ENCODE measurements at regions of chr1 and their contacts with region 1.

Region 1: GRCh38 chr1:205791568-205792180 is 16.4 kb upstream of the RAB29 start:
- DNase-seq: no peak
- H3K4me3 ChIP-seq: no peak overlapping the region
- H3K27ac ChIP-seq: no peak overlapping the region
- H3K27me3 ChIP-seq: no peaks in the 10 kb centered on the region
- CTCF ChIP-seq: peak; percentile 90

Region 2: DNA sequence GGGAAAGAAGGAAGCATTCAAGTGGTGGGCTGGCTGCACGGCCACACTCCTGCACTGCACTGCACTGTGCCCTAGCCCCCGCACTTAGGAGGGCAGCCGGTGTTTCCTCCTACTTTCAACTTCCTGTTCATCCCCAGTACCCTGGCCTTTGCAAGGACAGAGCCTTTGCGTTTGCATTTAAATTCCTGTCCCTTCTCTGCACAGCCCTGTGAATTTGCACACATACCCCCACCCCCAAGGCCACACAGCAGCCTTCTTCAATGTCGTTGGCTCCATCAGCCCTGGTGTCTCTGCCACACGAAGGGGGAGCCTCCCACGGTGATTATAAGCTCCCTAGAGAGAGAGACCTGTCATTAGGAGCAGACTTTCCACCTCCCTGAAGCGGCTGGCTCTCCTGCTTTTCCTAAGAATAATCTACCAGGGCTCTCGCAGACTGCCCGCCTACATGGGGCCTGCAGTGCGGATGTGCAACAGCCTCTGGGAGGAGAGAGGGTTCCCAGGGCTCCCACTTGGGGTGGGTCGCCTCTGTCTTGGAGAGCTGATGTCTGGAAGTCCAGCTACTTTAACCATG is 98.2 kb before region 1 on chr1:
- CTCF ChIA-PET with region 1: no interaction called
- POLR2A ChIA-PET with region 1: no interaction called
- DNase-seq: no peak
- H3K4me3 ChIP-seq: no peak overlapping the region
- H3K27ac ChIP-seq: no peak overlapping the region
- H3K27me3 ChIP-seq: peaks cover 3% of the 10 kb centered on the region
- CTCF ChIP-seq: no peak

Region 3: GRCh38 chr1:205775015-205775716 is 16.5 kb before region 1 on chr1 and contains the start of gene RAB29:
- CTCF ChIA-PET with region 1: interaction called, 11 read pairs
- POLR2A ChIA-PET with region 1: no interaction called
- DNase-seq: peak; percentile 46
- H3K4me3 ChIP-seq: peak within 1 kb of the TSS; percentile 97
- H3K27ac ChIP-seq: peak within 1 kb of the TSS; percentile 47
- H3K27me3 ChIP-seq: peaks cover 2% of the 10 kb centered on the region
- CTCF ChIP-seq: no peak
- polyA plus RNA-seq, gene RAB29: 13.8 and 14.6 TPM in 2 replicates

Region 4: DNA sequence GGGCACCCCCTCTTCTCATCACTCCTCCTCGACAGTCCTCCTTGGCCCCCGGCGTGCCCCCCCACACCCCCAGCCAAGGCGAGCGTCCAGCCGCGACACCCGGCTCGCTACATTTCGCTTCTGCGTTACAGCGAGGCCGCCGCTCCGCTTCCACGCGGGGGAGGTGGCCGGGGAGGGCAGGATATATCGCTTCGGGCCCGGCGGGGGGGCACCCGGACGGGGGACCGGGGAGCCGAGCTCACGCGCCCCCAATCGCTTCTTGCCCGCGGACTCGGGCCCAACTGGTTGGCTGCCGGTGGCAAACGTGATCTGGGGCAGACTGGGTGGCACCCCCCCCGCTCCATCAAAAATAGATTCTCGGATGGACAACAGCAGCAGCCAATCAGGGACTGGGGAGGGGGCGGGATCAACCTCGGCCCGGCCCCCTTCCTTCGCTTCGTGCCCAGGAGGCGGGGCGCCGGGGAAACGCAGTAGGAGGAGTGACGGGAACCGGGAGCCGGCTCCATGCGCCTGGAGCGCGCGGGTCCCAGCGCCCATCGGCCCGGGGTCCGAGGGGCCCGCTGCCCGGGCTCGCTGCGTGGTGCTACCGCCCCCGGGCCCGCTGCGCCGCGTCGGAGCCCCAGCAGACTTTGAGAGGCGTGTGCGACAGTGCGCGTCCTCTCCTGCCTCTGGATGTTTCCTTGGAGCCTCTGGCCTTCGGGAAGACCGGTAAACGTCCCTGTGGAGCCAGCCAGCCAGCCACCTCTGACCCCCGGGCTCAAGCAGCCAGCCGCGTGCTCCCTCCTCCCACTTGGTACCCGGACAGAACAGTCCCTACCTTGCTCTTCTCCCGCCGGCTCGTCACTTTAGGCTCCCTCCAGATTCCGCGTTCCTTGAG is 21.4 kb after region 1 on chr1 and contains the start of gene SLC41A1:
- CTCF ChIA-PET with region 1: interaction called, 20 read pairs
- POLR2A ChIA-PET with region 1: no interaction called
- DNase-seq: peak; percentile 63
- H3K4me3 ChIP-seq: peak within 1 kb of the TSS; percentile 83
- H3K27ac ChIP-seq: peak within 1 kb of the TSS; percentile 57
- H3K27me3 ChIP-seq: peaks cover 3% of the 10 kb centered on the region
- CTCF ChIP-seq: no peak
- polyA plus RNA-seq, gene SLC41A1: 23.9 and 29.0 TPM in 2 replicates

Region 5: GRCh38 chr1:205919026-205919746 is 127.5 kb after region 1 on chr1:
- CTCF ChIA-PET with region 1: interaction called, 15 read pairs
- POLR2A ChIA-PET with region 1: no interaction called
- DNase-seq: peak; percentile 60
- H3K4me3 ChIP-seq: no peak overlapping the region
- H3K27ac ChIP-seq: no peak overlapping the region
- H3K27me3 ChIP-seq: peaks cover 9% of the 10 kb centered on the region
- CTCF ChIP-seq: peak; percentile 93

Region 6: DNA sequence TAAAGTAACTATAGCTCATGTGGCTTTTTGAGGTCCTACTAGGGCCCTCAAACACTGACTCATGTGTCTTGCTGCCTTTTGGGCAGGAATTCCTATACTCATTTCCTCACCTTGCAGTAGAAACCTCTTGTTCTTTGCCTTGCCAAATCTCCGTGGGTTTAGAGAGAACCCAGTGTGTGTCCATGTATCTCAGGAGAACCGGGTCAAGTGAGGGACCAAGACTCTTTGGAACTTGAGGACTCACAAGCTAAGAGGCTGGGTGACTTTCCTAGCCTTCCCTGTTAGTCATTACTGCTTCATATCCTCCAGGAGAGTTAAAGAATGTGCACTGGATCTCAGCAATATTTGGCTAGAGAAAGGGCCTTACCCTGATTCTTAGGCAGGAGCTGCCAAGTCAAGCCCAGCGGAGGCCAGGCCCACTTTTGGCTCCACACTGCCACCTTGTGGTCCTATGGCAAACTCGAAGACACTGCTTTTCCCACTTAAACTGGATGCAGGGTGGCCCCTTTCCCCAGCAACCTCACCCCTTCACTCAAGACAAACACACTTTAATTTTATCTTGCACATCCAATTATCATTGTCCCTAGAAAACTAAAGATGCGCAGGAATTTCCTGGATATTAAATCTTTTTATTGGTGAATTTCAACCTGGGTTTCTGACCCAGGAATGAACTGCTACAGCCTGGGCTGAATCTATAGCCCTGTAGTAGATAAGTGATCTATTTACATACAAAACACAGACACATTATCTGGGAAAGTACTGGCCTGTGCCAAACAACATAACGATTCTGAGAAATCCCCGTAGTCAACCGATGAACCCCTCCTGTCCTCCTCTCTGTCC is 314.9 kb after region 1 on chr1:
- CTCF ChIA-PET with region 1: interaction called, 19 read pairs
- POLR2A ChIA-PET with region 1: no interaction called
- DNase-seq: peak; percentile 61
- H3K4me3 ChIP-seq: no peak overlapping the region
- H3K27ac ChIP-seq: no peak overlapping the region
- H3K27me3 ChIP-seq: peaks cover 43% of the 10 kb centered on the region
- CTCF ChIP-seq: peak; percentile 92

Measured in AG04450 (cell line).